ENCODE measurements at regions of chr5 and their contacts with region 1.

Region 1: GRCh38 chr5:153711755-153712154 is 221.3 kb downstream of the GRIA1 start:
- DNase-seq: no peak
- ATAC-seq: no peak
- H3K4me3 ChIP-seq: no peak overlapping the region
- H3K27ac ChIP-seq: no peak overlapping the region
- H3K4me1 ChIP-seq: no peaks in the 10 kb centered on the region
- H3K27me3 ChIP-seq: no peaks in the 10 kb centered on the region
- CTCF ChIP-seq: peak in 7 of 9 donors; percentile 24 to 55 (median 45)

Region 2: GRCh38 chr5:153490118-153491037 is 221.4 kb before region 1 on chr5 and contains the start of gene GRIA1:
- intact Hi-C with region 1: loop called in 8 of 10 experiments (anchors 5 to 10 kb)
- DNase-seq: no peak
- ATAC-seq: peak in 1 of 8 donors; percentile 42
- H3K4me3 ChIP-seq: peak within 1 kb of the TSS in 4 of 10 donors; percentile 5 to 18 (median 8)
- H3K27ac ChIP-seq: no peak within 1 kb of the TSS
- H3K4me1 ChIP-seq: peaks cover 0 to 11% (median 4%) of the 10 kb centered on the region in 9 donors
- H3K27me3 ChIP-seq: peaks cover 0 to 59% (median 44%) of the 10 kb centered on the region in 7 donors
- CTCF ChIP-seq: no peak
- total RNA-seq, gene GRIA1: 0.17 to 0.49 (median 0.26) TPM in 7 of 10 donors, not detected in the others

Measured in heart right ventricle (tissue), 16 donors.